GM12878 (cell line): ENCODE measurements at regions of chr17 and their contacts with region 1.

Region 1: DNA sequence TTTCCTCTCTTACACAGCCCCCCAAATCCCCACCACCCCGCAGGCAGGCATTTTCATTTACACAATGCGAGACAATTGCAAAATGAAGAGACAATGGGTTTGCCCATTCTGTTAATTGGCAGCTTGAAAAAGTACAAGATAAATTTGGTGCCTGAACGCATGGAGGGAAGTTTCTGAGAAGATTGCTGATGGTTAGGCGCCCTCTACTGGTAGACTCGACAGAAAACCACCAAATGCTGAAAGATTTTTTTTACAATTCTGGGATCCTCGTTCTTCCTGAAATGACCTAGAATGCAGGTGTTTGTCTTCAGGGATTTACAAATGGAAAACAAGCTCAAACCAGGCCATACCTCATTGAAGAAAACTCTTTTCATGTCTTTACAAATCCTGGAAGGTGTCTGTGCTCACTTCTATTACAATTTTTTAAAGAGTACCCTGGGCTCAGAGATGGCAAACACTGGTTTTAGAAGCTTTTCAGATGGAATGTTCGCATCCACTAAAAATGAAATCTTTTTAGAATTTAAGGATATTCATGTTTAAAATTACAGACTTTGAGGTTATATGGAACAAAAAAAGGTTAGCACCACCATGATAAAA is 338.5 kb downstream of the PMP22 start:
- DNase-seq: no peak
- ATAC-seq: no peak
- H3K4me3 ChIP-seq: no peak overlapping the region
- H3K27ac ChIP-seq: no peak overlapping the region
- H3K4me1 ChIP-seq: no peaks in the 10 kb centered on the region
- H3K27me3 ChIP-seq: no peaks in the 10 kb centered on the region
- CTCF ChIP-seq: peak; percentile 60 to 80 (median 68)
- EP300 ChIP-seq: no peak
- POLR2A ChIP-seq: no peak
- RAD21 ChIP-seq: peak; percentile 83

Region 2: GRCh38 chr17:13337864-13338371 is 1588.7 kb before region 1 on chr17:
- CTCF ChIA-PET with region 1: no interaction called
- POLR2A ChIA-PET with region 1: no interaction called
- RAD21 ChIA-PET with region 1: no interaction called
- SMC1A ChIA-PET with region 1: interaction called, 4 read pairs
- in situ Hi-C with region 1: loop called (anchors 10 kb)
- intact Hi-C with region 1: loop called (anchors 2 kb)
- DNase-seq: no peak
- ATAC-seq: no peak
- H3K4me3 ChIP-seq: no peak overlapping the region
- H3K27ac ChIP-seq: no peak overlapping the region
- H3K4me1 ChIP-seq: no peaks in the 10 kb centered on the region
- H3K27me3 ChIP-seq: no peaks in the 10 kb centered on the region
- CTCF ChIP-seq: peak; percentile 48 to 69 (median 60); a peak in 5 of 6 replicates
- EP300 ChIP-seq: no peak
- POLR2A ChIP-seq: no peak
- RAD21 ChIP-seq: peak; percentile 59

Region 3: GRCh38 chr17:14866266-14866665 is 60.4 kb before region 1 on chr17:
- CTCF ChIA-PET with region 1: no interaction called
- POLR2A ChIA-PET with region 1: no interaction called
- RAD21 ChIA-PET with region 1: no interaction called
- SMC1A ChIA-PET with region 1: no interaction called
- in situ Hi-C with region 1: no loop called
- intact Hi-C with region 1: loop called (anchors 10 kb)
- DNase-seq: no peak
- ATAC-seq: no peak
- H3K4me3 ChIP-seq: no peak overlapping the region
- H3K27ac ChIP-seq: no peak overlapping the region
- H3K4me1 ChIP-seq: no peaks in the 10 kb centered on the region
- H3K27me3 ChIP-seq: no peaks in the 10 kb centered on the region
- CTCF ChIP-seq: no peak
- EP300 ChIP-seq: no peak
- POLR2A ChIP-seq: no peak
- RAD21 ChIP-seq: no peak

Region 4: DNA sequence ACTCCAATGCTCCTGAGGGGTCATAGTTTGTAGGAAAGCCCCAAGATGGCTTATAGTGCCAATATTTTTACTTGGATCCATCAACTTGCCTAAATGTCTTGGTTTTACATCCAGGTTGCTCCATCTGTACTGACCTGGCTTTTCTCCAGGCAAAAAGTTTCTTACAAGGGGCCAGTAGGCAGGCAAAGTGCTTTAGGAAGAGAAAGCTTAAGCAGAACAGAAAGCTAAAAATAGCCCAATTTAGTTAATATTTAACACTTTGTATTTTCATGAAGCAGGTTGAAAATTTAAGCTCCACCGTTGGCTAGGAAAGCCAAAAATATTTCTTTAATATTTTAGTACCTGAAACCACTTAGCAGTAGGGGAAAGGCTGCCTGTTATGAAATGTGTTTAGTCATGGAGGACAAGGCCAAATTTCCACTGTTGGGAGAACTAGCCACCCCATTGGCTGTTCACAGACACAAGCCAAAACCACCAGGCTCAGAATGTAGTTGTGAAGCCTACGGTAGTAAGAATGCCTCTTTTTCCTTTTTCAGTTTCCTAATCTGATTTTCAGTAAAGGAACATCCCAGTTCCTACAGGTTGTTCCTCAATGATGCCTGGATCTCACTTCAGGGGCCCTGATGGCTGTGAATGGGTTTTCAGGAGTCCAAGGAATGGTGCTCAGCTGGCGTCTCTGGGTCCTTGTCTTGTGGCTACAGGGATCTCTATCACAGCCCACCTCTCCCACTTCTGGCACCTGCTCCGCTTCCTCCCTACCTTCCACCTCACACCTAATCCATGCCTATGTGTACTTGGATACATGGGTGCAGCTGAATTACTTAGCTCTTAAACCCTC is 13.7 kb after region 1 on chr17:
- CTCF ChIA-PET with region 1: interaction called, 12 read pairs
- POLR2A ChIA-PET with region 1: no interaction called
- RAD21 ChIA-PET with region 1: no interaction called
- SMC1A ChIA-PET with region 1: no interaction called
- in situ Hi-C with region 1: no loop called
- intact Hi-C with region 1: no loop called
- DNase-seq: no peak
- ATAC-seq: no peak
- H3K4me3 ChIP-seq: no peak overlapping the region
- H3K27ac ChIP-seq: no peak overlapping the region
- H3K4me1 ChIP-seq: no peaks in the 10 kb centered on the region
- H3K27me3 ChIP-seq: no peaks in the 10 kb centered on the region
- CTCF ChIP-seq: no peak
- EP300 ChIP-seq: no peak
- POLR2A ChIP-seq: no peak
- RAD21 ChIP-seq: no peak

Region 5: GRCh38 chr17:14959106-14959648 is 32.6 kb after region 1 on chr17:
- CTCF ChIA-PET with region 1: no interaction called
- POLR2A ChIA-PET with region 1: no interaction called
- RAD21 ChIA-PET with region 1: no interaction called
- SMC1A ChIA-PET with region 1: no interaction called
- in situ Hi-C with region 1: no loop called
- intact Hi-C with region 1: no loop called
- DNase-seq: no peak
- ATAC-seq: no peak
- H3K4me3 ChIP-seq: no peak overlapping the region
- H3K27ac ChIP-seq: no peak overlapping the region
- H3K4me1 ChIP-seq: no peaks in the 10 kb centered on the region
- H3K27me3 ChIP-seq: no peaks in the 10 kb centered on the region
- CTCF ChIP-seq: no peak
- EP300 ChIP-seq: no peak
- POLR2A ChIP-seq: no peak
- RAD21 ChIP-seq: no peak